ENCODE measurements at regions of chr1 and their contacts with region 1.

Region 1: GRCh38 chr1:67430352-67431155 is at the start of gene SERBP1:
- DNase-seq: peak; percentile 98
- ATAC-seq: peak; percentile 92
- H3K4me3 Mint-ChIP-seq: peak within 1 kb of the TSS; percentile 84
- H3K27ac Mint-ChIP-seq: peak within 1 kb of the TSS; percentile 98
- H3K4me1 Mint-ChIP-seq: peaks cover 40% of the 10 kb centered on the region
- H3K27me3 Mint-ChIP-seq: no peaks in the 10 kb centered on the region
- CTCF ChIP-seq: no peak
- total RNA-seq, gene SERBP1: 476 to 491 TPM

Region 2: DNA sequence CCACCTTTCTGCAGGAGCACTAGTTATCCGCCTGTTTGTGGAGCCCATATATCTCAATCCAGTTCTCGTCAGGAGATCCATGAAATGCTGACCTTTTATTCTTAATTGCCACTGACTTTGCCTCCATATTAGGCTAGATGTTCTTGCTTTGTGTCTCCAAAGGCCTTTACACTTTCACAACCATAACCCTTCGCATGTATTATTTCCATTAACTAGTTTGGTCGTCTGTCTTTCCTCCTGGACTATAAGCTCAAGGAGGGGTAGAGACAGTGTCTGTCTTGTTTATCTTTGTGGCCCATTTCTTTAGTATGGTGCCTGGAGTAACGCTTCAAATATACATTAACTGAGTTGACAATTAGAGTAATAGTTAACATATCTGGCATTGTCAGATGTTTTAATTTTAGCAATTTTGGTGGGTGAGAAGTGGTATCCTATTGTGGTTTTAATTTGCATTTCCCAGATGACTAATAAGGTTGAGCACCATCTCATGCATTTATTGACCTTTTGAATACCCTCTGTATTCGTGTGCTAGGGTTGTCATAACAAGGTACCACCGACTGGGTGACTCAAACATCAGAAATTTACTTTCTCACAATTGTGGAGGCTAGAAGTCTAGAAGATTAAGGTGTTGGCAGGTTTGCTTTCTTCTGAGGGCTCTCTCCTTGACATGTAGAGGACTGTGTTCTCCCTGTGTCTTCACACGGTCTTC is 144.6 kb before region 1 on chr1:
- CTCF ChIA-PET with region 1: no interaction called
- POLR2A ChIA-PET with region 1: interaction called, 13 read pairs
- intact Hi-C with region 1: no loop called
- DNase-seq: peak; percentile 57
- ATAC-seq: peak; percentile 96
- H3K4me3 Mint-ChIP-seq: no peak overlapping the region
- H3K27ac Mint-ChIP-seq: peak overlapping the region; percentile 88
- H3K4me1 Mint-ChIP-seq: peaks cover 37% of the 10 kb centered on the region
- H3K27me3 Mint-ChIP-seq: peaks cover 4% of the 10 kb centered on the region
- CTCF ChIP-seq: no peak

Region 3: GRCh38 chr1:67339623-67340343 is 90.8 kb before region 1 on chr1:
- CTCF ChIA-PET with region 1: no interaction called
- POLR2A ChIA-PET with region 1: interaction called, 55 read pairs
- intact Hi-C with region 1: no loop called
- DNase-seq: peak; percentile 59
- ATAC-seq: peak; percentile 65
- H3K4me3 Mint-ChIP-seq: peak overlapping the region; percentile 2
- H3K27ac Mint-ChIP-seq: peak overlapping the region; percentile 89
- H3K4me1 Mint-ChIP-seq: peaks cover 83% of the 10 kb centered on the region
- H3K27me3 Mint-ChIP-seq: no peaks in the 10 kb centered on the region
- CTCF ChIP-seq: no peak

Region 4: DNA sequence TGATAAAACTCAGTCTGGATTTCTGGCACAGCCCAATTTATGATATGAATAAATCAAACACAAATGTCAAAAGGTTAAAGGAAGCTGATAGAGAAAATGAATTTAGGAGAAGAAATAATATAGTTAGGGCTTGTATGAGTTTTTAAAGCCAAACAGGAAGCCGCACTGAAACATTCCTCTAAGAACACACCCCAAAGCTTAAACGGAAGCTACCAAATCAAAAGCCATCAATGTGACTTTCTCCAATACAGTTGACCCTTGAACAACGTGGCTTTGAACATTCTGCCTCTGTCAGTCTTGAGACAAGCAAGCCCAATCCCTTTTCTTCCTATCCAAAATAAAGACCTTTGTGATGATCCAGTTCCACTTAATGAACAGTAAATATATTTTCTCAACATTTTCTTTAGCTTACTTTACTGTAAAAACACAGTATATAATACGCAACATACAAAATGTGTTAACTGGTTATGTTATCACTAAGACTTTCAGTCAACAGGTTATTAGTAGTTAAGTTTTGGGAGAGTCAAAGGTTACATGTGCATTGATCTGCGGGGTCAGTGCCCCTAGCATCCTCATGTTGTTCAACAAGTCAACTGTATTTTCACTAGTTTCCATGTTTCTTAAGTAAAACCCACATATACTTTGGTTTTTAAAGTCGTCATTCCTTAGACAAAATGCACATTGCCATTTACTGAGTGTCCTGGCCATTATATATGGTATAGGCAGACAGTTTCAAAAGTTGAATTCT is 11.5 kb before region 1 on chr1:
- CTCF ChIA-PET with region 1: interaction called, 8 read pairs
- POLR2A ChIA-PET with region 1: interaction called, 172 read pairs
- intact Hi-C with region 1: no loop called
- DNase-seq: no peak
- ATAC-seq: no peak
- H3K4me3 Mint-ChIP-seq: no peak overlapping the region
- H3K27ac Mint-ChIP-seq: peak overlapping the region; percentile 71
- H3K4me1 Mint-ChIP-seq: peaks cover 76% of the 10 kb centered on the region
- H3K27me3 Mint-ChIP-seq: no peaks in the 10 kb centered on the region
- CTCF ChIP-seq: no peak

Region 5: GRCh38 chr1:67500413-67500959 is 69.9 kb after region 1 on chr1:
- CTCF ChIA-PET with region 1: interaction called, 21 read pairs
- POLR2A ChIA-PET with region 1: interaction called, 28 read pairs
- intact Hi-C with region 1: no loop called
- DNase-seq: peak; percentile 95
- ATAC-seq: peak; percentile 100
- H3K4me3 Mint-ChIP-seq: no peak overlapping the region
- H3K27ac Mint-ChIP-seq: peak overlapping the region; percentile 21
- H3K4me1 Mint-ChIP-seq: peaks cover 7% of the 10 kb centered on the region
- H3K27me3 Mint-ChIP-seq: peaks cover 7% of the 10 kb centered on the region
- CTCF ChIP-seq: peak; percentile 92

Region 6: DNA sequence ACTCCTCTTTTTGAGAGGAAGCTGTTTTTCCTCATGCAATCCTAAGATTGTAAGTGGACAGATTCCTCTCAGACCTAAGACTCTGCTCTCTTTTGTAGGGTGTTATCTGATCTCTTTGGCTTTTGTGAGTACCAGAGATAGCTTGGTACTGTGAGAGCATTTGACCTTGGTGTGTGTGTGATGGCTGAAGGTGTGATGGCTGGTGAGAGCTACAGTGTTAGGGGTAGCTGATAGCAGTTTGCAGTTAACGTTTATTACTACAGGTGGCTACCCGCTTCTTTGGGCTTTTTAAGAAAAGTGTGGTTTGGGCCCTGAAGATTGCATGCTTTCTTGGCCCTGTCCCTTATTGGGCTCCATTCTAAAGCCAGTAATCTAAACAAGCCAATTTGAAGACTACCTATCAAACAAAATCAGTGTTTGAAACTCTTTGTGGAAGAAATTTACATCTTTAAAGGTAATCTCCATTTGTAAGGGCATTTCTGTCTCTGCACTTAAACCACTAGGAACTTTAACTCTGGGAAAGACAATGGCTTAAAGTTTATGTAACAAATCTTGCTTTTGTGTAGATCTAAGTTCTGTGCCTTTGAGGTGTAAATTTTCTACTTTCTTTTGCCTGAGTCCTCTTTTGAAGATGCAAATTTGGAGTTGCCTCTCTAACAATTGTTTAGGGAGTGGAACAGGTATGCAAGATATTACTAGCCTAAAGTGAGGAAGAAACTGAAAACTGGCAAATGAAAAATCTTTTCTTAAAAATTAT is 84.9 kb after region 1 on chr1:
- CTCF ChIA-PET with region 1: no interaction called
- POLR2A ChIA-PET with region 1: no interaction called
- intact Hi-C with region 1: no loop called
- DNase-seq: no peak
- ATAC-seq: no peak
- H3K4me3 Mint-ChIP-seq: no peak overlapping the region
- H3K27ac Mint-ChIP-seq: no peak overlapping the region
- H3K4me1 Mint-ChIP-seq: no peaks in the 10 kb centered on the region
- H3K27me3 Mint-ChIP-seq: no peaks in the 10 kb centered on the region
- CTCF ChIP-seq: no peak